ENCODE measurements at regions of chr19 and their contacts with region 1.

Region 1: GRCh38 chr19:45405435-45406225 is 761 bp upstream of the PPP1R13L start:
- DNase-seq: peak; percentile 91
- ATAC-seq: peak; percentile 59
- H3K4me3 Mint-ChIP-seq: peak overlapping the region; percentile 95
- H3K27ac Mint-ChIP-seq: peak overlapping the region; percentile 97
- H3K4me1 Mint-ChIP-seq: peaks cover 34% of the 10 kb centered on the region
- H3K27me3 Mint-ChIP-seq: peaks cover 23% of the 10 kb centered on the region

Region 2: GRCh38 chr19:44954824-44955586 is 450.6 kb before region 1 on chr19 and contains the start of gene CLPTM1:
- CTCF ChIA-PET with region 1: interaction called, 3 read pairs
- POLR2A ChIA-PET with region 1: no interaction called
- intact Hi-C with region 1: loop called in 1 of 2 experiments (anchors 2 kb)
- DNase-seq: peak; percentile 99
- ATAC-seq: peak; percentile 94
- H3K4me3 Mint-ChIP-seq: peak within 1 kb of the TSS; percentile 95
- H3K27ac Mint-ChIP-seq: peak within 1 kb of the TSS; percentile 100
- H3K4me1 Mint-ChIP-seq: peaks cover 39% of the 10 kb centered on the region
- H3K27me3 Mint-ChIP-seq: no peaks in the 10 kb centered on the region
- total RNA-seq, gene CLPTM1: 41.6 to 44.1 TPM

Region 3: DNA sequence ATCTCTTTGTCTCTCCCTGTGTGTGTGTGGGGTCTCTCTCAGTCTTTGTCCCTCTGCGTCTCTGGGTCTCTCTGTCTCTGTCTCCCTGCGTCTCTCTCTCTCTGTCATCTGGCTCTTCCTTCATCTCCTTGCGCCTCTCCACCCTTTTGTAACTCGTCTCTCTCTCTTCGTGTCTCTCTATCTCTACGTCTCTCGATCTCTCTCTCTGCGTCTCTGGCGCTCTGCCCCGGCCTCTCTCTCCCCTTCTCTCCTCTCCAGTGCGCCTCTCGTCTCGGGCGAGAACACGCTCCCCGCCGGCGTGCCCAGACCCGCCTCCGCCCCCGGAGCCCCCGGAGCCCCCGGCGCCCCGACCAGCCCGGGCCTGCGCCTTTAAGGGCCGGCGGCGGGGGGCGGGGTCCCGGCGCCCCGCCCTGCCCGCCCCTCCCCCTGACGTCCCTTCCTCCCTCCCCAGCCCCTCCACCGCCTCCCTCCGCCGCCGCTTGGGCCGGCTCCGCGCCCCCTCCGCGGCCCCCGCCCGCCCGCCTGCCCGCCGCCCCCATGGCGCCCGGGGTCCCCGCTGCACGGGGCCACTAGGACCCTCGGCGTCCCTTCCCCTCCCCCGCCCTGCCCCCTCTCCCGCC is 154.7 kb before region 1 on chr19 and contains the start of gene MARK4:
- CTCF ChIA-PET with region 1: no interaction called
- POLR2A ChIA-PET with region 1: no interaction called
- intact Hi-C with region 1: loop called in 1 of 2 experiments (anchors 1 kb)
- DNase-seq: peak; percentile 72
- ATAC-seq: peak; percentile 67
- H3K4me3 Mint-ChIP-seq: peak within 1 kb of the TSS; percentile 77
- H3K27ac Mint-ChIP-seq: peak within 1 kb of the TSS; percentile 76
- H3K4me1 Mint-ChIP-seq: peaks cover 29% of the 10 kb centered on the region
- H3K27me3 Mint-ChIP-seq: peaks cover 2% of the 10 kb centered on the region
- total RNA-seq, gene MARK4: 19.1 to 19.6 TPM

Region 4: GRCh38 chr19:45423589-45424190 is 18.1 kb after region 1 on chr19 and contains the start of gene ERCC1:
- CTCF ChIA-PET with region 1: interaction called, 4 read pairs
- POLR2A ChIA-PET with region 1: interaction called, 3 read pairs
- intact Hi-C with region 1: loop called (anchors 1 kb)
- DNase-seq: peak; percentile 84
- ATAC-seq: peak; percentile 78
- H3K4me3 Mint-ChIP-seq: peak within 1 kb of the TSS; percentile 92
- H3K27ac Mint-ChIP-seq: peak within 1 kb of the TSS; percentile 95
- H3K4me1 Mint-ChIP-seq: peaks cover 55% of the 10 kb centered on the region
- H3K27me3 Mint-ChIP-seq: peaks cover 2% of the 10 kb centered on the region
- total RNA-seq, gene ERCC1: 58.1 to 71.8 TPM

Region 5: DNA sequence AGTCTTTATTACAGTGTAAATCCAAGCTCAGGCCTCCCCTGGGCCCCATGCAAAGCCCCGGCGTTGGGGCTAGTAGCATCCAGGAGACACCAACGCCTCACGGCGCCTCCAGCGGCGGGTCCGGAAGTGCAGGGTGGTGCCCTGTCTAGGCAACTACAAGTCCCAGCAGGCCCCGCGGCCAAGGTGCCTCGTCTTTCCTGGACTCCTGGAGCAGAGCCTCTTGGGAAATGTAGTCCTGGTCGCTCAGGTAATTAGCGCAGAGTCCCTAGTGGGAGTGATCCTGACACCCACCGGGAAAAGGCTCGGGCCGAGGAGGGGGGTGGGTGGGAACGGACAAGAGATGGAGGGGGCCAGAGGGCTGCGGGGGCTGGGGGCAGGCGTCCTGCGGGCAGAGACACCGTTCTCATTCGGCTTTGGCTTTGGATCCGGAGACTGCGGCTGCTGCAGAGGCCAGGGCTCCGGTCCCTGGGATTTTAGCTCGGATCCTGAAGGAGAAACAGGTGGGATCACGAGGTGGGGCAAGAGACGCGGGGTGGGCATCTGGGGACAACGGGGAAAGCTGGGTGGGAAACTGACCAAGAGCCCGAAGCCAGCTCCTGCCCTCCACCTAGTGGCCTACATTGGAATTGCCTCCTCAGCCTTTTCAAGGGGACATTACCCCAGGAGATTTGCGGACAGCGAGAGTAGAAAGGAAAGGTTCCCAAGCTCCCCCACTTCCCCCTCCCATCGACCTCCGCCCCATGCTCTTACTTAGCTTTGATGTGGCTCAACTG is 79.9 kb after region 1 on chr19:
- CTCF ChIA-PET with region 1: interaction called, 17 read pairs
- POLR2A ChIA-PET with region 1: no interaction called
- intact Hi-C with region 1: loop called in 1 of 2 experiments (anchors 1 kb)
- DNase-seq: peak; percentile 100
- ATAC-seq: peak; percentile 99
- H3K4me3 Mint-ChIP-seq: peak overlapping the region; percentile 83
- H3K27ac Mint-ChIP-seq: peak overlapping the region; percentile 91
- H3K4me1 Mint-ChIP-seq: peaks cover 13% of the 10 kb centered on the region
- H3K27me3 Mint-ChIP-seq: peaks cover 2% of the 10 kb centered on the region

Region 6: GRCh38 chr19:45643024-45643926 is 237.6 kb after region 1 on chr19:
- CTCF ChIA-PET with region 1: no interaction called
- POLR2A ChIA-PET with region 1: interaction called, 3 read pairs
- intact Hi-C with region 1: loop called (anchors 1 to 10 kb)
- DNase-seq: peak; percentile 97
- ATAC-seq: peak; percentile 54
- H3K4me3 Mint-ChIP-seq: peak overlapping the region; percentile 94
- H3K27ac Mint-ChIP-seq: peak overlapping the region; percentile 93
- H3K4me1 Mint-ChIP-seq: peaks cover 57% of the 10 kb centered on the region
- H3K27me3 Mint-ChIP-seq: no peaks in the 10 kb centered on the region

Region 7: DNA sequence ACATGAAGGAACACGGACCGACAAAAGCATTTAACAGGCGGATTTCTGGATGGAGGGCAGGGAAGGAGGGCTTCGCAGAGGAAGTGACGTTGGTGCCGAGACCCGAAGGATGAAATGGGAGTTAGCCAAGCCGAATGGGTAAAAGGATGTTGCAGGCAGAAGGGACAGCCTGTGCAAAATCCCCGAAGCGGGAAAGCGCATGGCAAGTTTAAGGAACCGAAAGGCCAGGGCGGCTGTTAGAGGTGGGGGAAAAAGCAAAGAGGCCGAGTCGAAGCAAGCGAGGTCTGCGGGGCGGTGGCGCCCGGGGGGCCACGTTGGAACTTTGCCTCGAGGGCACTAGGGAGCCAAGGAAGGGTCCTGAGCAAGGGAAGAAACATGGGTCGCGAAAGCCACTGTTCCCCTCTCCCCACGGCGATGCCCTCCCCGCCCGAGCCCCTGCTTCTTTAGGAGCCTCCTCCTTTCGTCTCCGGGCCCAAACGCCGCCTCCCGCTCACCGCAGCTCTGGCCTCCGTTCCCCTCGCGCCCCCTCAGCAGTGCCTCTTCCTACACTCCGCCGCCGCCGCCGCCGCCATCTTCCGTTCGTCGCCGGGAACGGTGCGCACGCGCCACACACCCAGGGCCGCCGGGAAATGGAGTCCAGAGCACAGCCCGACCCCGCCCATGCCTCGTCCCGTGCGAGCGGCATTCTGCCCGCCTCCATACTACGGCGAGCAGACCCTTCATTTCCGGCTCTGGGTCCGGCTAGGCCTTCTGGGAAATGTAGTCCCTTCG is 457.1 kb after region 1 on chr19 and contains the start of gene SYMPK:
- CTCF ChIA-PET with region 1: no interaction called
- POLR2A ChIA-PET with region 1: no interaction called
- intact Hi-C with region 1: loop called in 1 of 2 experiments (anchors 1 kb)
- DNase-seq: peak; percentile 100
- ATAC-seq: peak; percentile 96
- H3K4me3 Mint-ChIP-seq: peak within 1 kb of the TSS; percentile 87
- H3K27ac Mint-ChIP-seq: peak within 1 kb of the TSS; percentile 95
- H3K4me1 Mint-ChIP-seq: peaks cover 31% of the 10 kb centered on the region
- H3K27me3 Mint-ChIP-seq: peaks cover 17% of the 10 kb centered on the region
- total RNA-seq, gene SYMPK: 108 to 128 TPM

Measured in activated CD4-positive, alpha-beta T cell treated with anti-CD3 and anti-CD28 coated beads for 36 hours (primary cell).